ENCODE measurements at regions of chr6 and their contacts with region 1.

Region 1: GRCh38 chr6:25085756-25086155 is 150.0 kb upstream of the RIPOR2 start:
- DNase-seq: peak; percentile 95
- H3K4me3 ChIP-seq: no peak overlapping the region
- H3K27ac ChIP-seq: peak overlapping the region; percentile 68
- H3K4me1 ChIP-seq: peaks cover 46% of the 10 kb centered on the region
- H3K27me3 ChIP-seq: no peaks in the 10 kb centered on the region
- CTCF ChIP-seq: no peak
- POLR2A ChIP-seq: peak; percentile 65

Region 2: DNA sequence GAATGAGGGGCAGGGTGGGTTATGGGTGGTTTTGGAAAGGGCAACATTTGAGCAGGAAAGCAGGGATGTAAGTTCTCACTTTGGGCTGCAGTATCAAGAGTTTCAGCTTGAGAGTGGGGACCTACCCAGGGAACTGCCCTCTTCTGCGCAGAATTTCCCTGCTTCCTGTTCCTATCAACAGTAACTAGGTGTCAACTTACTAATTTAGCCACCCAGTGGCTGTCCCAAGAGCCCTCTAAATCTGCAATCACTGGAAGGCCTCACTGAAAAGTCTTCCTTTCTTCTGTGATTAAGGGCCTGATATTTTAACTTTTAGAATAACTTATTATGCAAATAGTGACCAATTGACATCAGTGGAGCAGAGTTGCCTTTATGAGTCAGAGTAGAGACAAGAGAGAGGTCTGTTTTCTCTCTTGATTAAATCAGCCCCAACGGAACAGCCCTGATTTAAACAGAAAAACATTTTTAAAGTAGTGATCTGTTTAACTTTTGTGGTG is 31.8 kb before region 1 on chr6:
- CTCF ChIA-PET with region 1: no interaction called
- POLR2A ChIA-PET with region 1: no interaction called
- dilution Hi-C with region 1: no loop called
- intact Hi-C with region 1: loop called (anchors 2 kb)
- DNase-seq: peak; percentile 27
- H3K4me3 ChIP-seq: no peak overlapping the region
- H3K27ac ChIP-seq: no peak overlapping the region
- H3K4me1 ChIP-seq: peaks cover 17% of the 10 kb centered on the region
- H3K27me3 ChIP-seq: no peaks in the 10 kb centered on the region
- CTCF ChIP-seq: no peak
- POLR2A ChIP-seq: no peak

Region 3: DNA sequence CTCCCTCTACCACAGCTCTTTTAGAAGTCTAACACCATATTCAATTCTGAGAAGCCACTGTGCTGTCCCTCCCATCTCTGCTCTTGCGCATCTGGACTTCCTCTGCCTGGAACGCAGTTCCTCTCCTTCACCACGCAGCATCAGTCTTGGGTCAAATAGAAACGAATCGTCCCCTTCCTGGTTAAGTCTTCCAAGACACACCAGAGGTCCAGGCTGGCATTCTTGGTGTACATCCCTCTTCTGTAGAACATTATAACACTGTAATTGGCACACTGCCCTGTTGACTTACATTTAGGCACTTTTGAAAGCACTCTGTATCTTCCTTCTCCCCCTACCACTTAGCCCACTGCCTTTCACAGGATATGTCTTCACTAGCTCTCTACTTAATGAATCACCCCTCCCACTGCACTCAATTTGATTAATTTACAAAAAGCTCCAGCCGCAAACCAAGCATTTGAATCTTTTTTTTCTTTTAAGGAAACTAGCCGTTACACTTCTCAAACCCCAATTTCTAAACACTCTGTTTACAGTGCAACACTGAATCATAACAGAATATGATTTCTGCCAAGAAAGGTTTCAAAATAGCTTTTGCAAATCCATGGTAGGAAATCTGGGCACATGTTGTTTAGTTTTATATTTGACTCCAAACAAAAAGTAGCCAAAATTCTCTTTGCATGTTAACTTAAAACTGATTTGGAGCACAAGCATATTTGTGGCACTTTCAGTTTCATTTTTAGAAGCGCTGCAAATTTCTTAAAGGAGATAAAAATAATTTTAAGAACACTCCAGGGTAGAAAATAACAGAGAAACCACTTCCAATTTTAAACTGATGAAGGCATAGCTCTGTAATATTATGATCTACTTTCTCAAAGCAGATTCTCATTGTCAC is 52.7 kb after region 1 on chr6:
- CTCF ChIA-PET with region 1: interaction called, 4 read pairs
- POLR2A ChIA-PET with region 1: no interaction called
- dilution Hi-C with region 1: no loop called
- intact Hi-C with region 1: loop called (anchors 1 kb)
- DNase-seq: peak; percentile 84
- H3K4me3 ChIP-seq: peak overlapping the region; percentile 29 to 71 (median 43)
- H3K27ac ChIP-seq: peak overlapping the region; percentile 45
- H3K4me1 ChIP-seq: peaks cover 13% of the 10 kb centered on the region
- H3K27me3 ChIP-seq: no peaks in the 10 kb centered on the region
- CTCF ChIP-seq: peak in 1 of 2 donors; percentile 11
- POLR2A ChIP-seq: no peak

Region 4: GRCh38 chr6:25173951-25174474 is 88.3 kb after region 1 on chr6:
- CTCF ChIA-PET with region 1: interaction called, 6 read pairs
- POLR2A ChIA-PET with region 1: interaction called, 3 read pairs
- dilution Hi-C with region 1: no loop called
- intact Hi-C with region 1: loop called (anchors 2 kb)
- DNase-seq: peak; percentile 93
- H3K4me3 ChIP-seq: no peak overlapping the region
- H3K27ac ChIP-seq: peak overlapping the region; percentile 38
- H3K4me1 ChIP-seq: peaks cover 37% of the 10 kb centered on the region
- H3K27me3 ChIP-seq: no peaks in the 10 kb centered on the region
- CTCF ChIP-seq: no peak
- POLR2A ChIP-seq: no peak